GM18951 (cell line): ENCODE measurements at regions of chrX and their contacts with region 1.

Region 1: GRCh38 chrX:136953867-136954787 is 73.6 kb upstream of the RBMX start:
- POLR2A ChIP-seq: no peak

Region 2: GRCh38 chrX:137051978-137052642 is 98.0 kb after region 1 on chrX:
- in situ Hi-C with region 1: loop called (anchors 10 kb)
- POLR2A ChIP-seq: no peak

Region 3: GRCh38 chrX:137194164-137194563 is 240.0 kb after region 1 on chrX:
- in situ Hi-C with region 1: loop called (anchors 25 kb)
- POLR2A ChIP-seq: no peak

Region 4: DNA sequence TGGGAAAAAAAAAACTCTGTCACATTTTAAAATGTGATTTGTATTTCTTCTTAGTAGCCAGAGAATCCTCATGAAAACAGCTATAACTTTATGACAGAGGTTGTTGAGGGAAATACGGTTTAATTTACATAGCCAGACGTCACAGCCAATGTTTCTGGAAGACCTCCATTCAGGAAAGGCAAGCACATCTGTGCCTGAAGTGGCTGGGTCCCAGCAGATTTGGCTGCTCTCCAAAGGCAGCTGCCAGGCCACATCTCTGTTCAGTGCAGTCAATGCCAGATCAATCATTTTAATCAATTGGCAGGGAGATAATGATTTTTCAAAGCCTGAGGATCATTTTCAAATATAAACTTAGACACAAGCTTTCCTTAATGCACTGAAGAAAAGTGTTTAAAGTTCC is 525.3 kb after region 1 on chrX:
- in situ Hi-C with region 1: no loop called
- POLR2A ChIP-seq: no peak